ENCODE measurements at regions of chr17 and their contacts with region 1.

Region 1: GRCh38 chr17:16304830-16305229 is 48.4 kb downstream of the CENPV start:
- DNase-seq: no peak
- H3K4me3 ChIP-seq: no peak overlapping the region
- H3K27ac ChIP-seq: no peak overlapping the region
- H3K4me1 ChIP-seq: no peaks in the 10 kb centered on the region
- H3K27me3 ChIP-seq: no peaks in the 10 kb centered on the region
- CTCF ChIP-seq: peak; percentile 51 to 74 (median 71)
- EP300 ChIP-seq: no peak
- POLR2A ChIP-seq: no peak
- RAD21 ChIP-seq: peak; percentile 55 to 75

Region 2: DNA sequence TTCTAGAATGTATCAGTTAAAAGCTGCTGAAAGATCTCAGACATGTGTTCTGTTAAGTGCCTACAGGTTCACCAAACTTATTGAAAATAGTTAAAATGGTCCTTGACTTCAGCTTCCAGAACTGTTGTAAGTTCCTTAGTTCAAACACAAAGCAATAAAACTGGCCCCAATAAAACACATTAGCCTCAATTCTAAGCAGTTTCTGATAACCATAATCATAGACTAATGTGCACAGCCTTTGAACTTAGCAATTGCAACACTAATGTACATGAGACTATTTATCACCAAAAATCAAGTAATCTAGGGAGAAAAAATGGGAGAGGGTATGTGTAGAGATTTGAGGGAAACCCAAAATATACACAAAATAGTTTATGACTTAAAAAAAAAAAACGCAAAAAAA is 72.4 kb before region 1 on chr17:
- CTCF ChIA-PET with region 1: no interaction called
- POLR2A ChIA-PET with region 1: no interaction called
- DNase-seq: no peak
- H3K4me3 ChIP-seq: no peak overlapping the region
- H3K27ac ChIP-seq: no peak overlapping the region
- H3K4me1 ChIP-seq: no peaks in the 10 kb centered on the region
- H3K27me3 ChIP-seq: no peaks in the 10 kb centered on the region
- CTCF ChIP-seq: no peak
- EP300 ChIP-seq: no peak
- POLR2A ChIP-seq: no peak
- RAD21 ChIP-seq: no peak

Region 3: DNA sequence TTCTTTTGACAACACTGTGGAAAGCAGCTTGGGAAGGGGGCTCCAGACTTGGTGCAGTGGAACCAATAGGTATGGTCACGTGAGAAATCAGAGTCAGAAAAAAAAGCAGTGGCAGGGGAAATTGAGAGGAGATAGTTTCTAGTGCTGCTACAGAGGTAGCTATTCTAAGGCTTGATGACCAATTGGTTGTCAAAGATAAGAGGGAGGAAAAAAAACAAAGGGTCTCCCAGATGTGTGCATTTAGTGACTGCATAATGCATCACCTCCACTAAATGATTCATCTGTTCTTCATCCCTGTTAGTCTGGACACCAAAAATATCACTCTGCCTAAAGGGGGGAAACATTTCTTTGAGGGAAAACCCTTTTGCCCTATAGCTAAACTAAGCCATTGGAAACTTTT is 31.3 kb before region 1 on chr17:
- CTCF ChIA-PET with region 1: interaction called, 12 read pairs
- POLR2A ChIA-PET with region 1: no interaction called
- DNase-seq: no peak
- H3K4me3 ChIP-seq: no peak overlapping the region
- H3K27ac ChIP-seq: no peak overlapping the region
- H3K4me1 ChIP-seq: no peaks in the 10 kb centered on the region
- H3K27me3 ChIP-seq: no peaks in the 10 kb centered on the region
- CTCF ChIP-seq: no peak
- EP300 ChIP-seq: no peak
- POLR2A ChIP-seq: no peak
- RAD21 ChIP-seq: no peak

Region 4: GRCh38 chr17:16285957-16286640 is 18.7 kb before region 1 on chr17:
- CTCF ChIA-PET with region 1: interaction called, 27 read pairs
- POLR2A ChIA-PET with region 1: no interaction called
- DNase-seq: peak; percentile 77 to 87
- H3K4me3 ChIP-seq: peak overlapping the region in 3 of 4 experiments; percentile 31 to 42 (median 40); a peak in 5 of 8 replicates
- H3K27ac ChIP-seq: no peak overlapping the region
- H3K4me1 ChIP-seq: peaks cover 5 to 9% (median 7%) of the 10 kb centered on the region in 4 experiments
- H3K27me3 ChIP-seq: peaks cover 0 to 4% (median 1%) of the 10 kb centered on the region in 4 experiments; a peak in 2 of 7 replicates
- CTCF ChIP-seq: peak; percentile 64 to 98 (median 87)
- EP300 ChIP-seq: no peak
- POLR2A ChIP-seq: no peak
- RAD21 ChIP-seq: peak; percentile 57 to 69; a peak in 3 of 4 replicates

Region 5: DNA sequence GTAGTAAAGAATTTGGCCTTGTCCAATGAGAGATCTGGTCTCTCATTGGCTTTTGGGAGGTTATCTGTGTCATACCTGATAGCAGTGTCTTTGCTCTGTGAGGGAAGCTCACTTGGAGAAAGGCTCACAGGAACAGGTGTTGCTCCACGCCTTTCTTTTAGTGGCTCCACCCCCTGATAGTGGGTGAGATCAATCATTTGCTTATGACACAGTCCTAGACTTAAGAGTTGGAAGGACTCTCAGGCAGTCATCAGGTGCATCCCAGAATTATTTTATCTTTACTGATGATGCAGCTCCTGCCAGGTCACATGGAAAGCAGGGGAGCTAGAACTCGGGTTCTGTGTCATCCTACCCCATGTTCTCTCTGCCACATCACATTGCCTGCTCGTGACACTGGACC is 10.9 kb before region 1 on chr17:
- CTCF ChIA-PET with region 1: interaction called, 37 read pairs
- POLR2A ChIA-PET with region 1: no interaction called
- DNase-seq: no peak
- H3K4me3 ChIP-seq: no peak overlapping the region
- H3K27ac ChIP-seq: no peak overlapping the region
- H3K4me1 ChIP-seq: peaks cover 0 to 5% (median 4%) of the 10 kb centered on the region in 4 experiments; a peak in 4 of 7 replicates
- H3K27me3 ChIP-seq: no peaks in the 10 kb centered on the region
- CTCF ChIP-seq: no peak
- EP300 ChIP-seq: no peak
- POLR2A ChIP-seq: no peak
- RAD21 ChIP-seq: no peak

Region 6: DNA sequence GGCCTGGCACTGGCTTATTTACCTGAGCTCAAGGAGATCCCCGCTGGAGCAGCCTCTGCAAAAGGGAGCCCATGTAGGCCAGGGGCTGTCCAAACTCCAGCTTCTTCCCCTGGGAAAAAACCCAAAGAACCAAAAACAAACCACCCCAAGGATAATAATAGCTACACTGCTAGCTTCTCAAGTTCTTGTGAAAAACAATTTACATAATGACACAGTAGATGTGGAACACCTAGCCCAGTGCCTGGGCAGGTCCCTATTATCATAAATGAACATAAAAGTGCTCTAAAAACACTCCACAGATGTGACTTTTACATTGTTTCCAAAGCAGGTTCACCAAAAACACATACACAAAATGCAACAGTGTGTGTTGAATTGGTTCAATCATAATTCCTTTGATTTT is 21.1 kb after region 1 on chr17:
- CTCF ChIA-PET with region 1: interaction called, 44 read pairs
- POLR2A ChIA-PET with region 1: no interaction called
- DNase-seq: no peak
- H3K4me3 ChIP-seq: no peak overlapping the region
- H3K27ac ChIP-seq: no peak overlapping the region
- H3K4me1 ChIP-seq: no peaks in the 10 kb centered on the region; a peak in 1 of 7 replicates
- H3K27me3 ChIP-seq: no peaks in the 10 kb centered on the region
- CTCF ChIP-seq: no peak
- EP300 ChIP-seq: no peak
- POLR2A ChIP-seq: no peak
- RAD21 ChIP-seq: no peak

Region 7: DNA sequence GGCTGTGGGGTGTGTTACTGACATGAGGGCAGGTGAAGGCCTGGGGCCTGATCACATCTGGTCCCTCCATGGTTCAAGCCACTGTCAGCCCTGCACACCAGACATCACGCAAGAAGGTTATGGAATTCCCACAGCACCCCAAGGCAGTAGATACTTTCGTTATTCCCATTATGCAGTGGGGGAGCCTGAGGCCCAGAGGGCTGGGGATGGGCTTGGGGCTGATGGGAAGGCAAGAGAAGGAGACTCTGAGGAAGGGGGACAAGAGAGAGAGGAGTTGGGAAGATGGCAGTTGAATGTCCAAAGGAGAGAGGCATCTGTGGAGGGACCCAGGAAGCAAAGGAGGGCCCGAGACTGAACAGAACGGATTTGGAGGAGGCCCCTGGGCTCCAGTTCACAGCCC is 145.2 kb after region 1 on chr17:
- CTCF ChIA-PET with region 1: interaction called, 11 read pairs
- POLR2A ChIA-PET with region 1: no interaction called
- DNase-seq: no peak
- H3K4me3 ChIP-seq: no peak overlapping the region
- H3K27ac ChIP-seq: no peak overlapping the region
- H3K4me1 ChIP-seq: peaks cover 0 to 4% (median 2%) of the 10 kb centered on the region in 4 experiments; a peak in 3 of 7 replicates
- H3K27me3 ChIP-seq: no peaks in the 10 kb centered on the region
- CTCF ChIP-seq: no peak
- EP300 ChIP-seq: no peak
- POLR2A ChIP-seq: no peak; a peak in 1 of 3 replicates
- RAD21 ChIP-seq: no peak